HCT116 (cell line): ENCODE measurements at regions of chr7 and their contacts with region 1.

Region 1: DNA sequence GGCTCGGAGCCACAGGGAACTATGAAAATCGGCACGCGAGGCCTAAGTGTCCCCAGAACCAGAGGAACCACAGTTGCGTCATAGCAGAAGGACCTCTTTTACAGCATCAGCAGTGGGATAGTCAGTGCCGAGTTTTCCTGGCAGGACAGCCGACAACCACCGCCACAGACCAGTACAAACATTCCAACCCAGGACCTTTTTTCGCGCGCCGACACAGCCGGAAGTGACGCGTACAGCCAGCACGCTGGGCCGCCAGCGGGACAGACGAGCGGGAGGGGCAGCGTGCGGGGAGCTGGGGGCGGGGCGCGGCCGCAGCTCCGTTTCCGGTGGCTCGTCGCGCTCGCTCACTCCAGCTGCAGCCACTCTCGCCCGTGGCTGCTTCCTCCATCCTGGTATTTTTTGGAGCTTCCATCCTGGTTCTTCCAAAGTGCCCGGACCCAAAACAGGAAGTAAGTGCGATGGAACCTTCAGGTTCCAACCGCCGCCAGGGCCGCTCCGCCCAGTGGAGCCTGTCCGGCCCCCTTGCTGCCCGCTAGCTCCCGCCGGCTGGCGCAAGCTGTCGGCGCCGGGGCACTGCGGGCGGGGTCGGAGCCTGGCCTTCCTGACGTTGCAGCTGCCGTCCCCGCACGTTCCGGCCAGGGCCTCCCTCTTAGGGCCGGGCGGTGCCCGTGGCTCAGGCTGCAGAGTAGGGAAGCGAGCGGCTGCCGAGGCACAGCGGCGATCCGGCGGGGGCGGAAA is at the start of gene DMTF1:
- DNase-seq: peak; percentile 89
- ATAC-seq: peak; percentile 87
- H3K4me3 ChIP-seq: peak within 1 kb of the TSS; percentile 90 to 92
- H3K27ac ChIP-seq: peak within 1 kb of the TSS; percentile 98
- H3K4me1 ChIP-seq: peaks cover 10 to 18% of the 10 kb centered on the region in 2 experiments; a peak in 3 of 4 replicates
- H3K27me3 ChIP-seq: no peaks in the 10 kb centered on the region
- CTCF ChIP-seq: no peak
- POLR2A ChIP-seq: peak; percentile 76
- RAD21 ChIP-seq: no peak
- total RNA-seq, gene DMTF1: 56.3 TPM

Region 2: GRCh38 chr7:86130268-86130667 is 1022.0 kb before region 1 on chr7:
- CTCF ChIA-PET with region 1: no interaction called
- POLR2A ChIA-PET with region 1: no interaction called
- RAD21 ChIA-PET with region 1: no interaction called
- intact Hi-C with region 1: no loop called
- DNase-seq: no peak
- ATAC-seq: no peak
- H3K4me3 ChIP-seq: no peak overlapping the region
- H3K27ac ChIP-seq: no peak overlapping the region
- H3K4me1 ChIP-seq: no peaks in the 10 kb centered on the region
- H3K27me3 ChIP-seq: no peaks in the 10 kb centered on the region
- CTCF ChIP-seq: no peak
- POLR2A ChIP-seq: no peak
- RAD21 ChIP-seq: no peak

Region 3: DNA sequence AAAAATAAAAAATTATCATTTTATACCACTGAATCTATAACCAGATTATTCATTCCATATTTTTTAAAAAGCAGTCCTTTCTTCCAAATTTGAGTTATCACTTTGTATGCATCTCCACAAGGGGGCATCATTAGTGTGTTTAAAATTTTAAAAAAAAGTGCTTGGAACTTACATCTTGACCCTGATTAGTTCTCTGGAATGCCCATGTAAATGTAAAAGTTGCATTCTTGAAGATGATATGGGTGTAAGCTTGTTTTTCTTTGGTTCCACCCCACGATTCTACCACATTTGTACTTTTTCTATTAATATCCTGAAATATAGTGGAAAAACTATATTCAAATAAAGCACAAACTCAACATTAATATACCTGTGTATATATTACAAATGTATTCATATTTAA is 237.7 kb before region 1 on chr7:
- CTCF ChIA-PET with region 1: interaction called, 8 read pairs
- POLR2A ChIA-PET with region 1: interaction called, 4 read pairs
- RAD21 ChIA-PET with region 1: no interaction called
- intact Hi-C with region 1: loop called (anchors 1 kb)
- DNase-seq: no peak
- ATAC-seq: no peak
- H3K4me3 ChIP-seq: no peak overlapping the region
- H3K27ac ChIP-seq: no peak overlapping the region
- H3K4me1 ChIP-seq: no peaks in the 10 kb centered on the region
- H3K27me3 ChIP-seq: no peaks in the 10 kb centered on the region
- CTCF ChIP-seq: peak; percentile 44 to 70 (median 53); a peak in 5 of 6 replicates
- POLR2A ChIP-seq: no peak
- RAD21 ChIP-seq: peak; percentile 40

Region 4: DNA sequence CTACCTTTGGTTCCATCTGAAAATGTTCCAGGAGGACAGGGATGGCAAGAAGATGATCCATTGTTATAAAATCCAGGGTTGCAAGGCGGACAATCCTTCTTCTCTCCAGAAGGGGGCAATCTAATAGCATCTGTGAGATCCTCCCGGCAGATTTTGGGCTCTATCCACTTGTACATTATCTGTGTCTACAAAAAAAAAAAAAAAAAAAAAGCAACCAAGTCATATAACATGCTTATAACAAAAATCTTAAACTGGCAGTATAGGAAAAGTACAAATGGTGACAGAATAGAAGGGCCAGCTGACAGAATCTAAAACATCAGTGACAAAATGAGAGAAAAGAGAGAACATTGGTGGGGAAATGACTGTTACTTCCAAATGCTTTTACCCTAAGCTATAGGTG is 225.5 kb before region 1 on chr7:
- CTCF ChIA-PET with region 1: interaction called, 32 read pairs
- POLR2A ChIA-PET with region 1: interaction called, 3 read pairs
- RAD21 ChIA-PET with region 1: interaction called in 1 of 2 experiments, 3 read pairs
- intact Hi-C with region 1: loop called (anchors 1 kb)
- DNase-seq: peak; percentile 24
- ATAC-seq: peak; percentile 67
- H3K4me3 ChIP-seq: no peak overlapping the region
- H3K27ac ChIP-seq: no peak overlapping the region
- H3K4me1 ChIP-seq: no peaks in the 10 kb centered on the region
- H3K27me3 ChIP-seq: no peaks in the 10 kb centered on the region
- CTCF ChIP-seq: peak; percentile 57 to 84 (median 69)
- POLR2A ChIP-seq: no peak
- RAD21 ChIP-seq: peak; percentile 72

Region 5: DNA sequence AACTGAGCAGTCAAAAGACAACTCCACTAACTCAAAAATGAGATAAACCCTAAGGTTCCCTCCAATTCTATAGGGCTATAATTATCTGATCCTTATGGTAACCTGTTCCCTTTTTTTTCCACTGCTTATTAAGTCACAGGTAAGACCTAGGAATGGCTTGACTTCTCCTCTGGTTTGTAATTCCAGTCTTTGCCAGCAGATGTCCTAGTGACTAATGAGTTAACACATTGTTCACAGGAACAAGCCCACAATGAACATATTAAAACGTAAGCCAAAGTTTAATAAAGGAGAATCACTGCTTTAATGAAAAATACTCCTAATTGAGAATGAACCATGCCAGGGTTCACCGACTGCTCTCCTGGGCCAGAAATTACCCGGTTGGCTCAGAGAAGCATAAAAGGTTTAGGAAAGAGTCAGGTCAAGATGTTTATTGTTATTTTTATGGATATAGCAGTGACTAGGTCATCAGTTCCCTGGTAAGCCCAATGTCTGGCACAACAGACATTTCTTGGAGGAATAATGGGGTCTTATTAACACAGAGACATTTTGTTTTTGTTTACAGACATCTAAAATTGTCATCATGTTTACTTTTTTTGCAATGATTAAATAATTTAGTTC is 213.0 kb before region 1 on chr7:
- CTCF ChIA-PET with region 1: interaction called, 3 read pairs
- POLR2A ChIA-PET with region 1: no interaction called
- RAD21 ChIA-PET with region 1: no interaction called
- intact Hi-C with region 1: loop called (anchors 1 kb)
- DNase-seq: peak; percentile 68
- ATAC-seq: peak; percentile 96
- H3K4me3 ChIP-seq: no peak overlapping the region
- H3K27ac ChIP-seq: no peak overlapping the region
- H3K4me1 ChIP-seq: no peaks in the 10 kb centered on the region
- H3K27me3 ChIP-seq: no peaks in the 10 kb centered on the region
- CTCF ChIP-seq: peak; percentile 62 to 73 (median 71)
- POLR2A ChIP-seq: no peak
- RAD21 ChIP-seq: peak; percentile 71

Region 6: DNA sequence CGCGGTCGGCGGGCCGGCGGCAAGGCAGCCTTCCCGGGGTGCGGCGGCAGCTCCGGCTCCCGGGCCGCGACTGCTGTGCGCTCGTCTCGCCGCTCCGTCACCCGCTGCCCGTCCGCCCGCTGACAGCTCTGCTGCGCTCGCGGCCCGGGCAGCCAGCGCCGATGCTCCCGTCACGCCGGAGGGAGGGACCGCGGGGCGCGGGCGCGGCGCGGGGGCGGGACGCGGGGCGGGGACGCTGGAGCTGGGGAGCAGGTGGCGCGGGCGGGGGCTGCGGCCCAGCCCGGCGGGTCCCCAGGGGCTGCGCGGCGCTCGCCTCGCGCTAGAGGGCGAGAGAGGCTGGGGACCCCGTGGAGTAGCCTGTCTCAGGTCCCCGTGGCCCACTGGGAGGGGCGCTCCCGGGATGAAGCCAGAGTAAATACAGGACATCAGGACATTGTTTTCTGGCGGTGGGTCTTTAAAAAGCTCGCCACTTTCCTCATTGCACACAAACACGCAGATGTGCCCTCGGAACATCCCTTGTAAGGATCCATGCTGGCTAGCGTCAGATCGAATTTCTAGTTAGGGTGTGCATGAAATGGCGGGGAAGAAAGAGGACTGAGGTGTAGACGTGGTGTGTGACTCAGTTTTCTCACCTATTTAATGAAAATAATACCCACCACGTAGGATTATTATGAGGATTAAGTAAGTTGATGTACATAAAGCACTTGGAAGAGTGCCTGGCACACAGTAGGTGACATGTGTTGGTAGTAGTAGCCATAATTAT is 92.6 kb before region 1 on chr7 and contains the start of gene ELAPOR2:
- CTCF ChIA-PET with region 1: interaction called, 3 read pairs
- POLR2A ChIA-PET with region 1: interaction called, 3 read pairs
- RAD21 ChIA-PET with region 1: no interaction called
- intact Hi-C with region 1: loop called (anchors 1 kb)
- DNase-seq: peak; percentile 36
- ATAC-seq: peak; percentile 95
- H3K4me3 ChIP-seq: peak within 1 kb of the TSS; percentile 60 to 72
- H3K27ac ChIP-seq: peak within 1 kb of the TSS; percentile 57
- H3K4me1 ChIP-seq: peaks cover 6 to 15% of the 10 kb centered on the region in 2 experiments; a peak in 3 of 4 replicates
- H3K27me3 ChIP-seq: no peaks in the 10 kb centered on the region
- CTCF ChIP-seq: peak in 2 of 3 experiments; percentile 35 to 42; a peak in 3 of 6 replicates
- POLR2A ChIP-seq: peak; percentile 40
- RAD21 ChIP-seq: peak; percentile 44
- total RNA-seq, gene ELAPOR2: 26.0 TPM

Region 7: DNA sequence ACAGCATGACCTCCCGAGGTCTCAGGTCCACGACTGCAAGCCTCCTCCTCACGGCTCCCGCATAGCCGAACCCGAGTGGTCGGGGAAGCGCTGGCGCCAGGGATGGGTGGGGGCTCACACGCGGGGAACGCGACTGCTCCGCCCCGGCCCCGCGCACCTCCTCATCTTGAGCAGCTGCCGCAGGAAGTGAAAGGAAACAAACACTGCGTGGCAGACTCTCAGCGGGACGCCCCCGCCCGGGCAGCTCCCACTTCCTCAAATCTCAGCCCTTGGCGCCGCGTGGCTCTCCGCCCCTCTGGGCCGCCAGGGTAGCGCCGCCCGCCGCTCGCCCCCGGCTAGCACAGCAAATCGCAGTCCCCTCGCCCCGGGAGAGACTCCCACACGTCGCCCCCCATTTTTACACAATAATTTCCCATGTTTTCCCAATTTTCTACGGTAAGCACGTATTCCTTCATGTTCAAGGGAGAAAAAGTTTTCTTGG is 67.3 kb after region 1 on chr7 and contains the start of gene TMEM243:
- CTCF ChIA-PET with region 1: no interaction called
- POLR2A ChIA-PET with region 1: interaction called, 10 read pairs
- RAD21 ChIA-PET with region 1: no interaction called
- intact Hi-C with region 1: no loop called
- DNase-seq: no peak
- ATAC-seq: peak; percentile 65
- H3K4me3 ChIP-seq: peak within 1 kb of the TSS; percentile 85 to 92
- H3K27ac ChIP-seq: peak within 1 kb of the TSS; percentile 75
- H3K4me1 ChIP-seq: peaks cover 0 to 19% of the 10 kb centered on the region in 2 experiments; a peak in 3 of 4 replicates
- H3K27me3 ChIP-seq: no peaks in the 10 kb centered on the region
- CTCF ChIP-seq: peak in 2 of 3 experiments; percentile 11 to 16; a peak in 1 of 6 replicates
- POLR2A ChIP-seq: no peak
- RAD21 ChIP-seq: no peak
- total RNA-seq, gene TMEM243: 23.3 TPM

Region 8: DNA sequence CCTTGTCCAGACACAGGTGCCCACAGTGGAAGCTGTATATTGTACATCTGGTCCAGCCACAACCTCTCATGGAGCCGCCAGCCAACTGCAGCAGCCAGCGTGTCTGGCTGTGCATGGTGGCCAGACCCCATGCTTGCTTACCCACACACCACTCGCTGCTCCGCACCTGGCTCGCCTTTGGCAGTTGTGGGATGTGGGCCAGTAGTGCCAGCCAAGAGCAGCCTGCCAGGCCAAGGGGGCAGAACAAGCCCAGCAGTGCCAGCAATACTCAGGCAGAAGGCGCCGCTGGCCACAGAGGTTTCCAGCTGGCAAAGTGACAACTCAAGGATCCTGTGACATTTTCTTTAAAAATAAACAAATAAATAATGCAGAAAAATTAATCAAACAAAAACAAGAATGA is 79.0 kb after region 1 on chr7:
- CTCF ChIA-PET with region 1: no interaction called
- POLR2A ChIA-PET with region 1: no interaction called
- RAD21 ChIA-PET with region 1: no interaction called
- intact Hi-C with region 1: loop called (anchors 2 kb)
- DNase-seq: no peak
- ATAC-seq: no peak
- H3K4me3 ChIP-seq: no peak overlapping the region
- H3K27ac ChIP-seq: no peak overlapping the region
- H3K4me1 ChIP-seq: no peaks in the 10 kb centered on the region
- H3K27me3 ChIP-seq: no peaks in the 10 kb centered on the region
- CTCF ChIP-seq: no peak
- POLR2A ChIP-seq: no peak
- RAD21 ChIP-seq: no peak